Activated T-helper 2 cell treated with anti-CD3 and anti-CD28 coated beads, Interferon-gamma antibody, Interleukin-2, Interleukin-4, amounts not matched to agents 10 μg/mL and 5 μg/mL and 100 μg/mL, durations not matched to agents 14 hours and 24 hours and 36 hours (primary cell): ENCODE measurements at regions of chr12 and their contacts with region 1.

Region 1: DNA sequence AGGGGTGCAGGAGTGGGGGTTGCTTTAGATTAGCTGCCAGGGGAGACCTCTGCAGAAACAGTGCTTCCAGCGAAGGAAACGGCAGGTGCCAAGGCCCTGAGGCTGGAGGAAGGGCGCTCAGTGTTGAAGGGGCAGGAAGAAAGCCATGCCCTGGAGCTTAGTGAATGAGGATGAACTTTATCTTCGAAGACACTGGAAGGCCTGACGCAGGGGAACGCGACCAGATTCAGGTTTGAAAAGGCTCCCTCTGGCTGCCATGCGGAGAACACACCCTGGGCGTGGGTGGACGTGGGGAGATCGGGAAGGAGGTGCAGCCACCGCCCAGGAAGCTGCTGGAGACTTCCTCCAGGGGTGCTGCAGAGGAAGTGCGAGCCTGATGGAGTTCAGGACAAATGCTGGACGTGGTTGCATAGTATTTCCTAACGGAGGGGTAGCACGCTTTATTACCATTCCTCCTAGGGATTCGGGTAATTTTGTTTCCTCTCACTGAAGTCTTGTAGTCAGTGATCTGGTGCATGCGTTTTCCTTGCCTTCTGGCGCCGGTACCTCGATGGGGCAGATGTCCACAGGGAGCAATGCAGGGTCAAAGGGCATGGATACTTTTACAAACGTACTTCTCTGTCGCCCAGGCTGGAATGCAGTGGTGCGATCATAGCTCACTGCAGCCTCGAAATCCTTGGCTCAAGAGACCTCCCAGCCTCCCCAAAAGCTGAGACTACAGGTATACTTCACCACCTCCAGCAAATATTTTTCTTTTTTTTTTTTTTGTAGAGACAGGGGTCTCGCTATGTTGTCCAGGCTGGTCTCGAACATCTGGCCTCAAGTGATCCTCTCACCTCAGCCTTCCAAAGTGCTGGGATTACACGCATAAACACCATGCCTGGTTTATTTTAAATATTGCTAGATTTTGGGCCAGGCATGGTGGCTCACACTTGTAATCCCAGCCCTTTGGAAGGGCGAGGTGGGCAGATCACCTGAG is 26.4 kb upstream of the UBC start:
- DNase-seq: peak; percentile 77
- H3K4me3 Mint-ChIP-seq: no peak overlapping the region
- H3K27ac Mint-ChIP-seq: no peak overlapping the region
- H3K4me1 Mint-ChIP-seq: peaks cover 13% of the 10 kb centered on the region
- H3K27me3 Mint-ChIP-seq: no peaks in the 10 kb centered on the region

Region 2: DNA sequence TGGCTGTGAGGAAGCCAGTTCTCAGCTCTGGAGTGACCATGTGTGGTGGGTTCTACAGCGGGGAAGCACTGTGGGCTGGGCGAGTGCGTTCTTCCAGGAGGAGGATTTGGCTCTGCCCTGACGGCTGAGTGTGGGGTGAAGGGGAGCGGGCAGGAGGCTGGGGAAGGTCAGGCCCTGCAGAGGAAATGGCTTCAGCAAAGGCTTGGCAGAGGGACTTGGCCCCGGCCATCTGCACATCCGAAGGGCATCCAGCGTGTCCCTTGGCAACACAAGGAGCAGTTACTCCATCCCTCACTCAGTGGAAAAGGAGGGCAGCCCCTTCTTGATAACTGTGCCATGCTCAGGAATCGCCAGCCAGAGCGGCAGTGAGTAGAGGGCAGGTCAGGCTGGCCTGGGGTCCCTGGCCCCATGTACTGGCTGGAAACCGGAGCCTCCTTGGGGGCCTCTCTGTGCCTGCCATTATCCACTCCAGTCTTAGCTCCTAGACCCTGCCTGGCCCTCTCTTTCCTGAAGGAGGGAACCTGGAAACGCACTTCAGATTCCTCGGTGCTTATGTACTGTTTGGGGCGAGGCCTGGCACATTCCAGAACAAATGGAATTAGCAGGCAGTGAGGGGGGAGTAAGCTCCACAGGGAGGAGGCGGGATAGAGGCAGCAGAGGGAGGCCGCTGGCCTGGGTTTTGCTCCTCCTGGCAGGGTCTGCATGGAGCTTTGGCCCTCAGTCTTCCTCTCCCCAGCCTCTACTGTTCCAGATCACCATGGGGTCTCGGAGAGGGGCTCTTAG is 239.8 kb before region 1 on chr12:
- intact Hi-C with region 1: no loop called
- DNase-seq: no peak
- H3K4me3 Mint-ChIP-seq: no peak overlapping the region
- H3K27ac Mint-ChIP-seq: no peak overlapping the region
- H3K4me1 Mint-ChIP-seq: no peaks in the 10 kb centered on the region
- H3K27me3 Mint-ChIP-seq: peaks cover 16% of the 10 kb centered on the region

Region 3: GRCh38 chr12:124906606-124907261 is 34.1 kb before region 1 on chr12:
- intact Hi-C with region 1: loop called (anchors 1 kb)
- DNase-seq: peak; percentile 83
- H3K4me3 Mint-ChIP-seq: no peak overlapping the region
- H3K27ac Mint-ChIP-seq: peak overlapping the region; percentile 58
- H3K4me1 Mint-ChIP-seq: peaks cover 24% of the 10 kb centered on the region
- H3K27me3 Mint-ChIP-seq: no peaks in the 10 kb centered on the region

Region 4: DNA sequence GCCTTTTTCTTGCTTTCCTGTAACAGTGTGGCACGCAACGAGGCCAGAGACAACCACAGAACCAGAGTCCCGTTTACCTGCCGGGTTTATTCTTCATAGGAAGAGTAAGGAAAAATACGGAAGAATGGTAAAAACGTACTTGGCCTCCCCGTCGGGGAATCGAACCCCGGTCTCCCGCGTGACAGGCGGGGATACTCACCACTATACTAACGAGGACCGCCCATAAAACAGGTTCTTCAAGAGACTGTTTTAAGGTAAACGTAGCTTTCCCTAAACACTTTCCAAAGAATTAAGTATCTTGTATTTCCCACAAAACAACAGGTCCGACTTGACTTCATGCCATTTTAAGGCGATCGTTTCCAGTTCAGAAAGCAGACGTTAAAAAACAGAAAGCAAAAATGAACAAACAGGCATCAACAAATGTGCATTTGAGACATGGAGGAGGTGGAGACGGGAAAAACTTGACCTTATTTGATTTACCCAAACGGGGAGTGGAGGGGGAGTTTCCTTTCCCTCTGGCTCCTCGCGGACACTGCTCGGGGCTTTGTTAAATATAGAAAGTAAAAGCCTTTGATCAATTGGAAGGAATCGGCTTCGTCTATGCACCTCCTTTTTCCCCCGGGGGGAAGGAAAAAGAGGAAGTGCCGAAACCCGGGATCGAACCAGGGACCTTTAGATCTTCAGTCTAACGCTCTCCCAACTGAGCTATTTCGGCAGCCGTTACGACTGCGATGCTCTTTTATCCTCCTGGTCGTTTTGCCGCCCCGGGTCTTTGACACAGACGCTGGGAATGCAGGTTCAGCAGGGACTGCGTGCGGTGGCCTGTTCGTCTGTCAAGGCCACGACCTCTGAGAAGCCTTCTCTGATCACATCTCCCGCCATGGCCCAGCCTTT is 13.4 kb before region 1 on chr12:
- intact Hi-C with region 1: loop called (anchors 1 kb)
- DNase-seq: peak; percentile 90
- H3K4me3 Mint-ChIP-seq: peak overlapping the region; percentile 92
- H3K27ac Mint-ChIP-seq: peak overlapping the region; percentile 88
- H3K4me1 Mint-ChIP-seq: peaks cover 30% of the 10 kb centered on the region
- H3K27me3 Mint-ChIP-seq: peaks cover 3% of the 10 kb centered on the region